H1 (cell line): ENCODE measurements at regions of chr2 and their contacts with region 1.

Region 1: DNA sequence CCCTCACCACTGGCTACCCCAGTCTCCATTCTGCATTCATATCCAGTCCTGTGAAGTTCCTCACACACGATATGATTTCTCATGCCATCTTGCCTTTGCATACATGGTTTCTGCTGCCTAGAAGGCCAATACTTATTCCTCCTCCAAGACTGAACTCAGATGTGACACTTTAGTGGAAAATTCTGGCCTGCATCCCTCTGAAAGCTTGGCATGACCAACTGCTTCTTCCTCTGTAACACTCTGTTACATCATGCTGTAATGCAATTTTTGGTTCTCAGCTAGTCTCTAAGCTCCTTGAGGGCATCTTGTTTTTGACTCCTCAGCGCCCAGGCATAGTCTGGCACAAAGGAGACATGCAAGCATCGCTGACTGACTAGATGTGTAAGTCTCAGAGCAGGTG is 12.6 kb downstream of the FAM161A start:
- DNase-seq: no peak
- H3K4me3 ChIP-seq: no peak overlapping the region
- H3K27ac ChIP-seq: no peak overlapping the region
- H3K4me1 ChIP-seq: no peaks in the 10 kb centered on the region
- H3K27me3 ChIP-seq: no peaks in the 10 kb centered on the region
- CTCF ChIP-seq: no peak
- EP300 ChIP-seq: no peak
- POLR2A ChIP-seq: no peak
- RAD21 ChIP-seq: no peak

Region 2: GRCh38 chr2:61854474-61855182 is 13.3 kb after region 1 on chr2:
- CTCF ChIA-PET with region 1: interaction called, 10 read pairs
- POLR2A ChIA-PET with region 1: interaction called, 3 read pairs
- DNase-seq: peak; percentile 87 to 91
- H3K4me3 ChIP-seq: peak overlapping the region; percentile 55 to 92 (median 90)
- H3K27ac ChIP-seq: peak overlapping the region; percentile 48; the same call in 1 of the 2 replicates
- H3K4me1 ChIP-seq: peaks cover 0 to 3% (median 1%) of the 10 kb centered on the region in 4 experiments; a peak in 2 of 7 replicates
- H3K27me3 ChIP-seq: no peaks in the 10 kb centered on the region
- CTCF ChIP-seq: peak in 1 of 3 experiments; percentile 10; a peak in 1 of 4 replicates
- EP300 ChIP-seq: no peak
- POLR2A ChIP-seq: peak in 1 of 2 experiments; percentile 60; a peak in 1 of 3 replicates
- RAD21 ChIP-seq: no peak

Region 3: DNA sequence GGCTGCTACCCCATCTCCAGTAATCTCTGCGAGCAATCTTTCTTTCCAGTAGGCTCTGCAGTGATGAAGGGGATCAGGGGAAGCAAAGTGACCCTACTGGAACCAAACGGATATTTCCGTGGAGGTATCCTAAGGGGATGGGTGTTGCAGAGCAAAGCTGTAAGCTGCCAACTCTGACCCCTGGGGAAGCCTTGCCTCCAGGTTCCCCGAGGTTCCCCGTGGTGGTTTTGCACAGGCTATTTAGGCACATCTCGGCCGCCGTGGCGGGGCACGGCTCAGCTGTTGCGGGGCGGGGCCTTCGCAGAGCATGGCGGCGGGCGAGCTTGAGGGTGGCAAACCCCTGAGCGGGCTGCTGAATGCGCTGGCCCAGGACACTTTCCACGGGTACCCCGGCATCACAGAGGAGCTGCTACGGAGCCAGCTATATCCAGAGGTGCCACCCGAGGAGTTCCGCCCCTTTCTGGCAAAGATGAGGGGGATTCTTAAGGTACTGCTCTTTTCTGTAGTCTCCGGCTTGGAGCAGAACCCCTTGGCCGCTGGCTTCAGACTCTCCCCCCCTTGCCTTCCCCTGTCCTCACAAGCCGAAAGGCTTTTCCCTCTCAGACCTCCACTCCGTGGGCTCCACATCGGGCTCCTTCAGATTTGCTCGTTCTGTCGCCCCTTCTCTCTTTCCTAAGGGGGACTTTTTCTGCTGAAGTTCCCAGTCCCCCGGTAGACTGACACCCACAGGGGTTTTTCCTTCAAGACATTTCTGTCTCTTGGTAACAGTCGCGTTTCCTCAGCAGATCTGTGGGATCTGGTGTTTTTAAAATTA is 64.3 kb after region 1 on chr2 and contains the start of gene COMMD1:
- CTCF ChIA-PET with region 1: no interaction called
- POLR2A ChIA-PET with region 1: no interaction called
- DNase-seq: peak in 1 of 2 experiments; percentile 86
- H3K4me3 ChIP-seq: peak within 1 kb of the TSS; percentile 73 to 94 (median 92)
- H3K27ac ChIP-seq: no peak within 1 kb of the TSS
- H3K4me1 ChIP-seq: no peaks in the 10 kb centered on the region
- H3K27me3 ChIP-seq: no peaks in the 10 kb centered on the region
- CTCF ChIP-seq: no peak
- EP300 ChIP-seq: peak in 1 of 2 experiments; percentile 55; a peak in 1 of 3 replicates
- POLR2A ChIP-seq: peak; percentile 70 to 87
- RAD21 ChIP-seq: 0 out of 4 replicates have a peak, but pooled peaks of 1 of the 2 experiments have one; percentile 10
- total RNA-seq, gene COMMD1: 23.5 and 27.8 TPM in 2 replicates

Region 4: GRCh38 chr2:61928826-61929461 is 87.7 kb after region 1 on chr2:
- CTCF ChIA-PET with region 1: no interaction called
- POLR2A ChIA-PET with region 1: no interaction called
- DNase-seq: no peak
- H3K4me3 ChIP-seq: no peak overlapping the region
- H3K27ac ChIP-seq: no peak overlapping the region
- H3K4me1 ChIP-seq: no peaks in the 10 kb centered on the region
- H3K27me3 ChIP-seq: 0 out of 7 replicates have a peak, but pooled peaks cover 0 to 2% (median 0%) of the 10 kb centered on the region in 4 experiments
- CTCF ChIP-seq: no peak
- EP300 ChIP-seq: no peak
- POLR2A ChIP-seq: no peak
- RAD21 ChIP-seq: no peak